Sciatic nerve (tissue), 2 donors: ENCODE measurements at regions of chr3 and their contacts with region 1.

Region 1: GRCh38 chr3:23894254-23895061 is 22.3 kb downstream of the NKIRAS1 start:
- DNase-seq: no peak
- ATAC-seq: peak; percentile 27

Region 2: GRCh38 chr3:24072193-24072592 is 177.7 kb after region 1 on chr3:
- intact Hi-C with region 1: loop called (anchors 5 kb)
- DNase-seq: no peak
- ATAC-seq: no peak